AG04450 (cell line): ENCODE measurements at regions of chr11 and their contacts with region 1.

Region 1: DNA sequence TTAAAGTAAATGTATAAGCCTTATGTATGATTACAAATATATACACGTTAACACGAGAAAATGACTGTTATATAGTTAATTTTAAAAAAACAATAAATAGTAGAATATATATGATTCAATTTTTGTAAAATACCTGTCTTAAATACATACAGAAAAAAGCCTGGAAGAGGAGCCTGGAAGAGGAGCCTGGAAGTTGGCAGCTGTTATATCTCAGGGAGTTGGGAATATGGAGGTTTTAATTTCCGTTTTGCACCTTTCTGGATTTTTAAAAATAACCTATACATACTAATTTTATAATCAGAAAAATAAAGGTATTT is 111.6 kb downstream of the WT1 start:
- DNase-seq: no peak
- H3K4me3 ChIP-seq: no peak overlapping the region
- H3K27ac ChIP-seq: no peak overlapping the region
- H3K27me3 ChIP-seq: no peaks in the 10 kb centered on the region
- CTCF ChIP-seq: no peak

Region 2: DNA sequence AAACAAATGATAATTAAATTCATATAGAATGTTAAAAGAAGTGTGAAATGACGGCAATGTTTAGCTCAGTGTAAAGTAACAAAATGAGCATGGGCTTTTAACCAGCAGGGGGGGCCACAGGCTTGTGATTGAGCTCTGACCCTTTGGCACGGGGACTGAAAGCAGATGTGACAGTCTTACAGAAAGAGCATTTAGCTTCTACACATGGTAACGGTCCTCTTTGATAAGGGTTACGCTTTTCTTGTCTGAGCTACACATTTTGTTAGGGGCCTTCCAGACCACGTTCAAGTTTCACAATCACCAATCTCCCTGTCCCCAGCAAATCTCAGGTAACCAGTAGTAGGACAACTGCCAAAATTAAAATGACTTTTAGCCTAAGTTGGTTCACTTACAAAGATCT is 1216.7 kb before region 1 on chr11:
- CTCF ChIA-PET with region 1: interaction called, 11 read pairs
- POLR2A ChIA-PET with region 1: no interaction called
- DNase-seq: no peak
- H3K4me3 ChIP-seq: no peak overlapping the region
- H3K27ac ChIP-seq: no peak overlapping the region
- H3K27me3 ChIP-seq: no peaks in the 10 kb centered on the region
- CTCF ChIP-seq: peak; percentile 46

Region 3: DNA sequence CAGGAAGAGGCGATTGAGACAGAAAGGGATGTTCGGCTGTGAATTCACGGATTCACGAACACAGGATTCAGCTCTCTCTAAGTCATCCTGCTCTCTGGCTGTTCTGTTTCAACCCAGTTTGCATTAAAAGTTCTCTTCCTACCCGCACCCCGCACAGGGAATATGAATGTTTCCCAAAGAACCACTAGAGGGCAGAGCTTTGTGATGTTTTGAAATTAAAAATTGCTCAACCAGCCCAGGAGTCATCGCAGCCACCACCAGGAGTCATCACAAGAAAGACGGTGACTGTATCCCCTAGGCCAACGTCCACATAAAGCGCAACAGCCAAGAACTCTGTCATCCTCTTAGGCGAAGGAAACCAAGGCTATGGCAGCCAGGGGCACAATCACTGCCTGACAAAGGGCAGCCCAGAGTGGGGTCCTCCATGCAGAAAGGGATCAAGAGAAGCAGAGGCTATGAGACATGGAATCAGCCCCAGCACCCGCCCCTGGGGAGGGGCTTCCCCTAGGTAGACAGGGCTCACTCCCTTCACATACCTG is 10.8 kb before region 1 on chr11:
- CTCF ChIA-PET with region 1: interaction called, 36 read pairs
- POLR2A ChIA-PET with region 1: no interaction called
- DNase-seq: no peak
- H3K4me3 ChIP-seq: no peak overlapping the region
- H3K27ac ChIP-seq: no peak overlapping the region
- H3K27me3 ChIP-seq: peaks cover 2% of the 10 kb centered on the region
- CTCF ChIP-seq: peak; percentile 58

Region 4: DNA sequence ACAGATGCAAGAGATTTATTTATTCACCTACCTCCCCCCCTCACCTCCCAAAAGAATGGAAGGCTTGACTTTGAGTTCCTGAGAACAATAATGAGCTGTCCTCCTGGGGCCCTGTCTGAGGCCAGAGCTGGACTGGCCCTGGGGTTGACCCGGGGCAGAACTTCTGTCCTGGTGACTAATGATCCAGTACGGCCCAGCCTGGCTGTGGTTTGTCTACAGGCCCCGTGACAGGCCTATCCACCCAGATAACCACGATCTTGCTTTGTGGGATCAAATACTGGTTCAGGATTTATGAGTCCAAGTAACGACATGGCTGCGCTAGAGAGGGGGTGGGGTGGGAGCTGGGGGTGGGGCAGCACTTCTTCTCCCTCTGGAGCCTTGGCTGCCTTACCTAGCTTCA is 30.1 kb after region 1 on chr11:
- CTCF ChIA-PET with region 1: no interaction called
- POLR2A ChIA-PET with region 1: no interaction called
- DNase-seq: no peak
- H3K4me3 ChIP-seq: no peak overlapping the region
- H3K27ac ChIP-seq: no peak overlapping the region
- H3K27me3 ChIP-seq: no peaks in the 10 kb centered on the region
- CTCF ChIP-seq: no peak